K562 (cell line): ENCODE measurements at regions of chr12 and their contacts with region 1.

Region 1: DNA sequence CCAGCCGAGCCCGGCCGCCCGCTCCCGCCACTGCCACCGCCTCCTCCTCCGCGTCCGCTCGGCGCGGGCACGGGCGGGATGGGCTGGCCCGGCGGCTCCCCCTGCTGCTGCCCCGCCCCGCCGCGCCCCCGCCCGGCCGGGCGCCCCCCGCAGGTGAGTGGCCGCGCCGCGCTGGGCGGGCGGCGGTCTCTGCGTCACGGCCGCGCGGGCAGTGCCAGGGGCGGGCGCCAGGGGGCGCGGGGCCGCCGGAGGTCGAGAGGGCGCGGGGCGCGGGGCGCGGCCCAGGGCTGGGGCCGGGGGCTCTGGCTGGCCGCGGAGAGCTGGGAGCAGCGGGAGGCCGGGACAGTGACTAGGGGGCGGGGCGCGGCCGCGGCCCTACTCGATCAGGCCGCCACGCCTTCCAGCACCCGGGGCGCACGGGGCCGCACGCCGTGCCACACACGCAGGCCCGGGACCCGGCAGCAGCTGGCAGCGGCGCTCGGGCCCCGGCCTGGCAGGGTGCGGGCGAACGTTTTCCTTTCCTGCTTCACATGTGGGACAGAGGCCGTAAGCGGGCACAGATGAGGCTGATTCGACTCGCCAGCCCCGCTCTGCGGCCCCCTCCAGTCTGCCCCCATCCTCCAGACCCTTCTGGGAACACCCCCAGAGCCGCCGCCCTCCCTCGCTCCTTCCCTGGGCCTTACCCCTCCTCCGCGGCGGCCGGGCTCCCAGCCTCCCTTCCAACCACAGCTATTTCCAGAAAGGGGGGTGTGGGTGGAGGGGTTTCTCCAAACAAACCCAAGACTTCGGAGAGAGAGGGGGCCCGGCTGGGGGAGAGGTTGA is 2.4 kb upstream of the TNS2 start:
- DNase-seq: peak; percentile 80 to 94 (median 94)
- ATAC-seq: peak; percentile 61
- H3K4me3 ChIP-seq: peak overlapping the region; percentile 67
- H3K27ac ChIP-seq: peak overlapping the region; percentile 88; the same call in 1 of the 3 replicates
- H3K4me1 ChIP-seq: peaks cover 60 to 73% of the 10 kb centered on the region in 2 experiments
- H3K27me3 ChIP-seq: no peaks in the 10 kb centered on the region
- CTCF ChIP-seq: peak in 2 of 3 experiments; percentile 42 to 55; a peak in 4 of 6 replicates
- EP300 ChIP-seq: no peak
- POLR2A ChIP-seq: no peak
- RAD21 ChIP-seq: peak in 1 of 2 experiments; percentile 20; a peak in 1 of 4 replicates

Region 2: DNA sequence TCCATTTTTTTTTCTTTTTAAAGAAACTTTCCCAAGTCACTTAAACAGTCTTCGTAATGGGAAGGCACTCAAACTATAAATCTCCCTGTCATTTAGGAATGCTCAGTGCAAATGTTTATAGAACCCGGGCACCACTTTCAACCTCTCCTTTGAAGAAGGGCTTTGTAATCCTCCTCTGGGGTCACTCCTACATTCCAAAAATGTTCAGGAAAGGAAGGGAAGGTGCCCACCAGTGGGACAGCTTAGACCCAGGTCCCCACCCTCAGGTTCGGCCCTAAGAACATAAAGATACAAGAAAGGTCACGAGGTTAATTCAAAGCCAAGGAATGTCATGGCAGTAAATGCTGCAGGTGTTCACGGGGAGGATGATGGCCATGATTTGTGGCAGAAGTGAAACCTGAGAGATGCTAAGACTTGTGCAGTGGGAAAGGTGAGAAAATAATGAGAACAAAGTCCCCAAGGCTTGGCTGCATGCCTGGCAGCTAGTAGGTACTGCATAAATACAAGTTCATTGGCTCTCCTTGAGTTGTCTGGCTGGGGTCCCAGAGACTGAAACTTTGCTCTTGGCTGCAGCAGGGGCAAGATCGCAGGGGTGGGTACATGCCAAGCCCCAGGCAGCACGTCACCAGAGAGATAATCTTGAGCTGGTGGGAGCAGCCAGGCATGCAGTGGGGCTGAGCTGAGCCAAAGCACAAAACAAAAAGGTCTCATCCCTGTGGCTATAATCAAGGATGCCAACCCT is 77.4 kb before region 1 on chr12:
- CTCF ChIA-PET with region 1: no interaction called
- POLR2A ChIA-PET with region 1: no interaction called
- in situ Hi-C with region 1: no loop called
- intact Hi-C with region 1: no loop called
- DNase-seq: no peak
- ATAC-seq: no peak
- H3K4me3 ChIP-seq: no peak overlapping the region
- H3K27ac ChIP-seq: no peak overlapping the region
- H3K4me1 ChIP-seq: peaks cover 3 to 12% of the 10 kb centered on the region in 2 experiments; a peak in 4 of 5 replicates
- H3K27me3 ChIP-seq: no peaks in the 10 kb centered on the region
- CTCF ChIP-seq: no peak
- EP300 ChIP-seq: no peak
- POLR2A ChIP-seq: no peak
- RAD21 ChIP-seq: no peak

Region 3: GRCh38 chr12:53025250-53025649 is 22.2 kb before region 1 on chr12:
- CTCF ChIA-PET with region 1: no interaction called
- POLR2A ChIA-PET with region 1: interaction called, 11 read pairs
- in situ Hi-C with region 1: no loop called
- intact Hi-C with region 1: no loop called
- DNase-seq: no peak
- ATAC-seq: 0 out of 3 replicates have a peak, but pooled peaks have one; percentile 43
- H3K4me3 ChIP-seq: no peak overlapping the region
- H3K27ac ChIP-seq: no peak overlapping the region
- H3K4me1 ChIP-seq: no peaks in the 10 kb centered on the region
- H3K27me3 ChIP-seq: no peaks in the 10 kb centered on the region
- CTCF ChIP-seq: no peak
- EP300 ChIP-seq: no peak
- POLR2A ChIP-seq: no peak
- RAD21 ChIP-seq: no peak

Region 4: GRCh38 chr12:53036802-53037201 is 10.6 kb before region 1 on chr12:
- CTCF ChIA-PET with region 1: no interaction called
- POLR2A ChIA-PET with region 1: interaction called, 20 read pairs
- in situ Hi-C with region 1: no loop called
- intact Hi-C with region 1: no loop called
- DNase-seq: no peak
- ATAC-seq: no peak
- H3K4me3 ChIP-seq: no peak overlapping the region
- H3K27ac ChIP-seq: no peak overlapping the region
- H3K4me1 ChIP-seq: no peaks in the 10 kb centered on the region
- H3K27me3 ChIP-seq: no peaks in the 10 kb centered on the region
- CTCF ChIP-seq: no peak
- EP300 ChIP-seq: no peak
- POLR2A ChIP-seq: no peak; the same call in 1 of the 2 replicates
- RAD21 ChIP-seq: no peak

Region 5: GRCh38 chr12:53105712-53106439 is 58.4 kb after region 1 on chr12:
- CTCF ChIA-PET with region 1: no interaction called
- POLR2A ChIA-PET with region 1: no interaction called
- in situ Hi-C with region 1: no loop called
- intact Hi-C with region 1: no loop called
- DNase-seq: no peak
- ATAC-seq: no peak
- H3K4me3 ChIP-seq: no peak overlapping the region
- H3K27ac ChIP-seq: no peak overlapping the region
- H3K4me1 ChIP-seq: peaks cover 18 to 23% of the 10 kb centered on the region in 2 experiments
- H3K27me3 ChIP-seq: no peaks in the 10 kb centered on the region; a peak in 1 of 5 replicates
- CTCF ChIP-seq: no peak
- EP300 ChIP-seq: no peak
- POLR2A ChIP-seq: no peak
- RAD21 ChIP-seq: no peak

Region 6: GRCh38 chr12:53115891-53116648 is 68.6 kb after region 1 on chr12:
- CTCF ChIA-PET with region 1: no interaction called
- POLR2A ChIA-PET with region 1: no interaction called
- in situ Hi-C with region 1: no loop called
- intact Hi-C with region 1: no loop called
- DNase-seq: peak in 1 of 4 experiments; percentile 3
- ATAC-seq: no peak
- H3K4me3 ChIP-seq: no peak overlapping the region
- H3K27ac ChIP-seq: no peak overlapping the region
- H3K4me1 ChIP-seq: peaks cover 4 to 8% of the 10 kb centered on the region in 2 experiments; a peak in 3 of 5 replicates
- H3K27me3 ChIP-seq: no peaks in the 10 kb centered on the region
- CTCF ChIP-seq: no peak
- EP300 ChIP-seq: no peak
- POLR2A ChIP-seq: no peak
- RAD21 ChIP-seq: no peak